Left ventricle myocardium inferior (tissue), 1 donor: ENCODE measurements at regions of chr16 and their contacts with region 1.

Region 1: GRCh38 chr16:14539631-14540030 is 90.4 kb downstream of the PARN start:
- DNase-seq: no peak
- H3K4me3 ChIP-seq: no peak overlapping the region
- H3K27ac ChIP-seq: no peak overlapping the region
- H3K4me1 ChIP-seq: no peaks in the 10 kb centered on the region
- H3K27me3 ChIP-seq: no peaks in the 10 kb centered on the region
- CTCF ChIP-seq: no peak

Region 2: GRCh38 chr16:13919683-13920509 is 619.7 kb before region 1 on chr16 and contains the start of gene ERCC4:
- intact Hi-C with region 1: loop called (anchors 10 kb)
- DNase-seq: peak; percentile 100
- H3K4me3 ChIP-seq: peak within 1 kb of the TSS; percentile 89
- H3K27ac ChIP-seq: peak within 1 kb of the TSS; percentile 87
- H3K4me1 ChIP-seq: peaks cover 44% of the 10 kb centered on the region
- H3K27me3 ChIP-seq: no peaks in the 10 kb centered on the region
- CTCF ChIP-seq: no peak
- total RNA-seq, gene ERCC4: 8.2 TPM

Region 3: GRCh38 chr16:14063618-14064581 is 475.7 kb before region 1 on chr16:
- intact Hi-C with region 1: no loop called
- DNase-seq: no peak
- H3K4me3 ChIP-seq: no peak overlapping the region
- H3K27ac ChIP-seq: no peak overlapping the region
- H3K4me1 ChIP-seq: no peaks in the 10 kb centered on the region
- H3K27me3 ChIP-seq: no peaks in the 10 kb centered on the region
- CTCF ChIP-seq: no peak

Region 4: GRCh38 chr16:14249291-14250032 is 290.2 kb before region 1 on chr16:
- intact Hi-C with region 1: loop called (anchors 10 kb)
- DNase-seq: no peak
- H3K4me3 ChIP-seq: no peak overlapping the region
- H3K27ac ChIP-seq: no peak overlapping the region
- H3K4me1 ChIP-seq: no peaks in the 10 kb centered on the region
- H3K27me3 ChIP-seq: no peaks in the 10 kb centered on the region
- CTCF ChIP-seq: peak; percentile 87

Region 5: GRCh38 chr16:14464796-14465360 is 74.8 kb before region 1 on chr16:
- intact Hi-C with region 1: no loop called
- DNase-seq: no peak
- H3K4me3 ChIP-seq: no peak overlapping the region
- H3K27ac ChIP-seq: no peak overlapping the region
- H3K4me1 ChIP-seq: peaks cover 3% of the 10 kb centered on the region
- H3K27me3 ChIP-seq: no peaks in the 10 kb centered on the region
- CTCF ChIP-seq: no peak

Region 6: DNA sequence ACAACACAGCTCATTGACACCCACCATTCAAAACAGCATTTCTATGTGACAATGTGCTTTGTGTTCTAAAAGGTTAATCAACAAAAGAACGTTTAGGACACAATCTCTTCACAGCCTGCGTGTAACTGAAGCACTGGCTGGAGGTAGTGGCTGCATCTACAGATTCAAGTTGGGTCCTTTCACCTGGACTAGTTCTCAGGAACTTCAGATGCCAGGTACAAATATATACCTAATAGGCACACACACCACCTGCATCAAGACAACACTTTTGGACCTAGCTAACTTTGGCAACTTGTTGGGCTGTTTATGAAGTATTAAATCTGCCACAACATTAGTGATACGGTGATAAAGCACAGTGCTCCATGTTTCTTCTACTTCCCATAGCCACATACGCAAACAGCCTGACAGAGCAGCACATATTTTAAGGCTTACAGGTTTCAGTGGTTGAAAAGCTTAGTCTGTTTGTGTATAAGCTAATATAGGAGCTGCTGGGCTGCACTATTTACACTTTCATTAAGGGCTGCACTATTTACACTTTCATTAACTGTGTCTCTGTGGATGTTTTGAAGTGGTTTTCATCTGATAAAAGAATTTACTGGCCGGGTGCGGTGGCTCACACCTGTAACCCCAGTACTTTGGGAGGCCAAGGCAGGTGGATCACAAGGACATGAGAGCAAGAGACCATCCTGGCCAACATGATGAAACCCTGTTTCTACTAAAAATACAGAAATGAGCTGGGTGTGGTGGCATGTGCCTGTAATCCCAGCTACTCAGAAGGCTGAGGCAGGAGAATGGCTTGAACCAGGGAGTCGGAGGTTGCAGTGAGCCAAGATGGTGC is 42.2 kb before region 1 on chr16:
- intact Hi-C with region 1: no loop called
- DNase-seq: no peak
- H3K4me3 ChIP-seq: no peak overlapping the region
- H3K27ac ChIP-seq: peak overlapping the region; percentile 72
- H3K4me1 ChIP-seq: peaks cover 63% of the 10 kb centered on the region
- H3K27me3 ChIP-seq: no peaks in the 10 kb centered on the region
- CTCF ChIP-seq: no peak